Cardiac septum (tissue), 1 donor: ENCODE measurements at regions of chr19 and their contacts with region 1.

Region 1: DNA sequence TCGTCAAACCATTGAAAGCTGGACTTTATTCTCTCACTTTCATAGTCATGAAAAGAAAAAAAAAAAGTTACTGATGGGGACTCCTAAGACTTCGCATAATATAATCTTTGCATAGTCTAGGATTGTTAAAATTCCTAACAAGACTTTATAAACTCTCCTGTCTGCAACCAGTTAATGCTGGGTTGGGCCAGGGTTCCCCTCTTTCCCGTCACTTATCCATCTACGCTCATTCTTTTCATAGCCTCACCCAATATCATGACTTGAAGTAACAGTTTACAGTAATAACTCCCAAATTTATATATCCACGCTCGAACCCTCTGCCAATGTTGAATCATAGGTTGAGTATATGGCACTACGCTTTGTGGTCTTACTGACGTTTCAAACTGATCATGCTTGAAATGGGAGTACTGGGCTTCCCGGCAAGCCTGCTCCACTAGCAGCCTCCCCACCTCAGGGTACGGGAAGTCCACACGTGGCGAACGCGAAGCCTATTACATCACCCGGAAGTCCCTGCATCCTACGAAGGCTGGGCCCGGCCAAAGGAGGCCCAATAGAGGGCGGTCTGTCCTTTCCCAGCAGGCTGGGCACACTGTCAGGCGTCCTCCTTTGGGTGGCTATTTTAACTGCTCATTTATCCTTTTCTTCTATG is 743 bp upstream of the ZNF460 start:
- DNase-seq: peak; percentile 94

Region 2: GRCh38 chr19:57191141-57192076 is 88.1 kb before region 1 on chr19 and contains the start of gene ZNF264:
- intact Hi-C with region 1: loop called (anchors 1 kb)
- DNase-seq: peak; percentile 94
- total RNA-seq, gene ZNF264: 23.0 TPM

Region 3: DNA sequence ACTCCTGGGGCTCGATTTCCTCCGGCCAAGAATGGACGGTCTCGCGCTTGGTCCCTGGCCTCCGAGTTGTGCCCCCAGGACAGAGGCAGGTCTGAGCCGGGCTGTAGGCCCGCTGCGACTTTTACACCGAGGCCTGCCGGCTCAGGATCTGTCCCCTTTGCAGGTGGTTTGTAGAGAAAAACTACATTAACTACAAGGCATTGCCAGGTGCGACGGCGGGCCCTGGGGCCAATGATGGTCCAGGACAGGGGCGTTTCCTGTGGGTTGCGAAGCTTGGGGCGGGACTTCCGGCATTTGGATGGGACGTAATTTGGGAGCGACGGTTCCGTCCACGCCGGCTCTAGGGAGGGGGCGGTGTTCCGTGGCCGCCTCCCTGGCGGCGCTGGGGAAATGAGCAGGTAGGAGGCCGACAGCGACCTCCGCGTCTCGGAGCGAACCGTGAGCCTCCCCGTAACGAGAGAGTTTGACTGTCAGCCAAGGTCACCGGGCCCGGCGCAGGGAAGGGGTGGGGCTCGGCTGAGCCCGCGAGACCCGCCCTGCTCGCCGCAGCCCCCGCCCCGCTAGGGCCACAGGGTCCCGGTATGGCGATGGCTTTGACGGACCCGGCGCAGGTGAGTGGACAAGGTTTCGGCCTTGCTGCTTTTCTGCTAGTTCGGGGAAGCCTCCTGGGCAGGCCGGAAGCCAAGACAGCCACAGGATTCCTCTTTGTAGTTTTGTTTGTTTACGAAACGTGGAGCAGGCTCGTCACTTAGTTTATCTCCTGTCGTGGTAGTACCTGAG is 39.0 kb before region 1 on chr19 and contains the start of gene ZNF805:
- intact Hi-C with region 1: loop called (anchors 2 kb)
- DNase-seq: peak; percentile 97
- total RNA-seq, gene ZNF805: 12.8 TPM

Region 4: DNA sequence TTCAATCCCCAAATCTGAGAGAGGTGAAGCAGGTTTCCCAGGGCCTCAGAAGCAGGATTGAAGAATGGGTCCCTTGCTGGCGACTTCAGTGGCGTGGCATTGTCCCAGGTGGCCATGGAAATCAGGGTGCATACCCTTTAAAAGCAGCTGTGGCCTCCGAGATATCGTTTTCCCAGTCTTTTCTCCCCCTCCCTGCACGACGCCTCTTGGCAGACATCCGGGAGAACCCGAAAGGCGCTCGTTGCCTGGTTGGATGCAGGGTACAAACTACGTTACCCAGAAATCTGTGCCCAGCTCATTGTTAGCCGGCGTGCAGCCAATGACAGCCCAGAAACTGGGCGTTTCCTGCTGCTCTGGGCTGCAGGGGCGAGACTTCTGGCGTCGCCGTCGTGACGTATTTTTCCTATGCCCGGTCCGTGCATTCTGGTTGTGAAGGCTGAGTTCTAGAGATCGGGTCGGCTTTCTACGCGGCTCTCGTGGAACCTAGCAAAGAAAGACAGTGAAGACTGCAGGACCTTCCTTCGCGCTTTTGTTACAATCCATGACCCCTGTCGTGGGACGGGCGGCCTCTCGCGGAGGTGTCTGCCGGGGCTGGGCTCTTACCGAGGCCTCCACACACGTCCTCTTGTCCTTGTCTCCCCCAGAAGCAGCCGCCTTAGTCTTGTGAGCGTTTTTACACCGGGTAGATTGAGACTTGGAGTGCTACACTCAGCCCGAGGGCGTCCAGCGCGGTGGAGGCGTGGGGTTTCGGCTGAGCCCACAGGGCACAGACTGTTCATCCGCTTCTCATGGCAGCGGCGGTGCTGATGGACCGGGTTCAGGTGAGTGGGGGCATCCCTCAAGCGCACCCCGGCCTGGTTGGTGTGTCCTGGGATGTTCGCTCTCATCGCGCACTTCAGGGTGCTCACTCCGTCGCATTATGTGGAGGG is 71.6 kb after region 1 on chr19 and contains the start of gene ZNF304:
- intact Hi-C with region 1: loop called (anchors 2 kb)
- DNase-seq: peak; percentile 96
- total RNA-seq, gene ZNF304: 10.0 TPM

Region 5: GRCh38 chr19:57362997-57363705 is 83.6 kb after region 1 on chr19 and contains the starts of genes TRAPPC2B and ZNF547:
- intact Hi-C with region 1: loop called (anchors 1 kb)
- DNase-seq: peak; percentile 99
- total RNA-seq, gene TRAPPC2B: 10.2 TPM
- total RNA-seq, gene ZNF547: 4.0 TPM